GM13976 (cell line): ENCODE measurements at regions of chr12 and their contacts with region 1.

Region 1: GRCh38 chr12:39692258-39692853 is 72.8 kb upstream of the ABCD2 start:
- DNase-seq: peak; percentile 36
- CTCF ChIP-seq: no peak

Region 2: DNA sequence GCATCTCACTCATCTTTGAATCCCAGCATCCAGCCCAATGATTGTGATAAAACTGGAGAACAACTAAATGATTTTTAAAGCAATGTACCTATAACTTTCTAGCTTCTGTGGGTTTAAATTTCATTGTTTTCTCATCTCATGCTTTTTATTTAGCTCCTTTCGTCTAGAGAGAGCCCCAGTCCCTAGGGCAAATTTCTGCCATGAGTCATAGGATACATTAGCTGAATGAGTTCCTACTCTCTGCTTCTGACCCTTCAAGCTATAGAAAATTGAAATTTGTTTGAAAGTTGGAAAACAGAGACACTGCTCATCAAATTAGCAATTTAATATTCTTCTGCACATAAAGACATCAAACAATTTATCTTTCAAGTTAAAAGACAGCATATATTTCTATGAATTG is 363.3 kb before region 1 on chr12:
- in situ Hi-C with region 1: loop called (anchors 10 kb)
- DNase-seq: no peak
- CTCF ChIP-seq: no peak

Region 3: GRCh38 chr12:39483042-39483441 is 209.3 kb before region 1 on chr12:
- in situ Hi-C with region 1: no loop called
- DNase-seq: no peak
- CTCF ChIP-seq: no peak

Region 4: GRCh38 chr12:39780919-39781467 is 88.6 kb after region 1 on chr12:
- in situ Hi-C with region 1: loop called (anchors 25 kb)
- DNase-seq: no peak
- CTCF ChIP-seq: no peak

Region 5: GRCh38 chr12:40634517-40635131 is 942.3 kb after region 1 on chr12:
- in situ Hi-C with region 1: no loop called
- DNase-seq: no peak
- CTCF ChIP-seq: no peak